ENCODE measurements at regions of chr11 and their contacts with region 1.

Region 1: DNA sequence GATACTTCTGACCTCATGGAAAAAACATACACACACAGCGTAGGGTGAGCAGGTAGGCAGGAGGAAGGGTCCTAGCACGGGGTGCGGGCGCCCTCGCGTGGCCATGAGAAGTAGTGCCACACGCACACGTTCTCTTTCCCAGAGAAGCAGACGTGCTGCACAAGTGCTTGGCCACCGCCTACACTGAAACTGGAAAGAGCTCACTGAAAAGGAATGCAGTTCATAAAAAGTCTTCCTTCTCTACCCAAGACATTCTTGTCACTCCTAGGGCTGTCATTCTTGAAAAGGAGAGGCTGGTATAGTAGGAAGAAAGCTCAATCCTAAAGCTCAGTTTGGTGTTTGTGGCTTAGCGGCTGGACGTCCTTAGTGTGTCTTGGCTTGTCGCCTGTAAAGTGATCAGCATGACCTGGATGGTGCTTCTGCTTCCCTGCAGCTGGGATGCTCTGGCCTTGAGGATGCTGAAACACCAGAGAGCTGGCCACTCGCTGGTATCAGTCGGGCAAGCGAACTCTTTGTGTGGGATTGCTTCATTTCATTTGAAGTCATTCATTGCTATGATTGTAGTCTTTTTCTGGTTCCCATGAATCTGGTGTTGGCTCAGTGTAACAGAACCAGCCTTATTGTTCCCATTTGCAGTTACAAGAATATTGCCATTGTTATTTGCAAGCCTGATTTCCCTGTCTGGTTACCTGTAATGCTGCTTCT is 303.8 kb downstream of the NTM start:
- DNase-seq: peak; percentile 74 to 88
- H3K4me3 ChIP-seq: no peak overlapping the region
- H3K4me3 Mint-ChIP-seq: no peak overlapping the region
- H3K27ac Mint-ChIP-seq: no peak overlapping the region
- H3K4me1 ChIP-seq: no peaks in the 10 kb centered on the region
- H3K4me1 Mint-ChIP-seq: no peaks in the 10 kb centered on the region
- H3K27me3 ChIP-seq: no peaks in the 10 kb centered on the region
- H3K27me3 Mint-ChIP-seq: peaks cover 18% of the 10 kb centered on the region
- CTCF ChIP-seq: peak; percentile 99 to 100

Region 2: GRCh38 chr11:131038597-131038996 is 635.6 kb before region 1 on chr11:
- CTCF ChIA-PET with region 1: no interaction called
- POLR2A ChIA-PET with region 1: no interaction called
- intact Hi-C with region 1: loop called (anchors 1 kb)
- DNase-seq: peak; percentile 45 to 59
- H3K4me3 ChIP-seq: no peak overlapping the region
- H3K4me3 Mint-ChIP-seq: no peak overlapping the region
- H3K27ac Mint-ChIP-seq: no peak overlapping the region
- H3K4me1 ChIP-seq: no peaks in the 10 kb centered on the region; the same call in 1 of the 2 replicates
- H3K4me1 Mint-ChIP-seq: no peaks in the 10 kb centered on the region
- H3K27me3 ChIP-seq: no peaks in the 10 kb centered on the region
- H3K27me3 Mint-ChIP-seq: peaks cover 10% of the 10 kb centered on the region
- CTCF ChIP-seq: peak; percentile 33 to 58

Region 3: DNA sequence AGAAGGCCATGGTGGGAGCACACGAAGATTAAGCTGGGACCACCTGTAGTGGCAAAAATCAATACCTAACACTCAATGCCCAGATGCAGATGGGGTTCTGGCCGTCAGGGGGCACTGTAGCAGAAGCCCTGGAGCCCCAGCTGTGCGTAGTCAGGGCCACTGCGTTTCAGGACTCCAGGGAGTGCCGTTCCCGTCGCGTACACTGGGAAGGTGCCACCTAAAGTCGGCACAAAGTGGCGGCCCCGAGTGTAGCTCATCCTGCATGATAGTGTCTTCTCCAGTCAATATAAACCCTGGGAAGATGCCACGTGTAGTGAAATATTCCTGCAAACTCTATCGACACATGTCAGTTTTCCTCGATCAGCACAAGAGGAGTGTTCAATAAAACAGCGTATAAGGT is 427.5 kb before region 1 on chr11:
- CTCF ChIA-PET with region 1: no interaction called
- POLR2A ChIA-PET with region 1: no interaction called
- intact Hi-C with region 1: loop called (anchors 1 kb)
- DNase-seq: peak; percentile 63 to 65
- H3K4me3 ChIP-seq: no peak overlapping the region
- H3K4me3 Mint-ChIP-seq: no peak overlapping the region
- H3K27ac Mint-ChIP-seq: no peak overlapping the region
- H3K4me1 ChIP-seq: no peaks in the 10 kb centered on the region; the same call in 1 of the 2 replicates
- H3K4me1 Mint-ChIP-seq: no peaks in the 10 kb centered on the region
- H3K27me3 ChIP-seq: 0 out of 2 replicates have a peak, but pooled peaks cover 2% of the 10 kb centered on the region
- H3K27me3 Mint-ChIP-seq: peaks cover 35% of the 10 kb centered on the region
- CTCF ChIP-seq: peak; percentile 75 to 76

Region 4: DNA sequence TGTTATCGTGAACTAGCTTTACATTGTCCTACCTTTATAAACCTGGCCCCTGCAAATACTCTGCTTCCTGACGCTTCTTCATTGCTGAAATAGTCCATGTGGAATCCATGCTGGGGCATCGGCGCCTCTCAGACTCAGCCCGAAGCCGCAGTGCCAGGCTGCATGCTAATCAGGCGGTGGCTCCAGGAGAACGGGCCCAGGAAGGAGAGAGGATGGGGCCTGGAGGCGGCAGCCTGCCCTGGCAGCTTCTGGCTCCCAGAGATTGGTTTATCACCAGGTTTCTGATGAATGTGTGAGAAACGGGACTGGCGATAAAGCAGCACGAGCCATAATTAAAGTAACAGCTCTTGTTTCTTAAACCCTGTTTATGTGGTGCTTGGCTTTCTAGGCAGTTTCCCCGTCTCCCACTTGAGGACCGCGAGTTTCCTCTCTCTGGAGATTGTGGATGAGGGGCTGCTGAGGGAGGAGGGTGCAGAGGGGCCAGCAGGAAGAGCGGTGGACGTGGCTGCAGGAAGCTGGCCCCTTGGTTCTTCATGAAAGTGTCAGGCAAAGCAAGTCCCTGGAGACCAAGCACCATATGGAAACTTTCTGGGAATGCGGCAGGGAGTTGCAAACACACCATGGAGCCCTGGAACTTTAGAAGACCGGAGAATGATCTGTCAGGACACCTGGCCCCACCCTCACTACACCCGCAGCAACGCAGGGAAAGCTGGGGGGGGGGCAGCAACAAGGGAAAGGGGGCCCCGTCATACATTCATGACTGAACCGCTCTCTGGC is 210.4 kb before region 1 on chr11:
- CTCF ChIA-PET with region 1: interaction called, 4 read pairs
- POLR2A ChIA-PET with region 1: no interaction called
- intact Hi-C with region 1: loop called (anchors 10 kb)
- DNase-seq: no peak
- H3K4me3 ChIP-seq: no peak overlapping the region
- H3K4me3 Mint-ChIP-seq: no peak overlapping the region
- H3K27ac Mint-ChIP-seq: no peak overlapping the region
- H3K4me1 ChIP-seq: no peaks in the 10 kb centered on the region
- H3K4me1 Mint-ChIP-seq: no peaks in the 10 kb centered on the region
- H3K27me3 ChIP-seq: no peaks in the 10 kb centered on the region; the same call in 1 of the 2 replicates
- H3K27me3 Mint-ChIP-seq: peaks cover 17% of the 10 kb centered on the region
- CTCF ChIP-seq: no peak

Measured in Caco-2 (cell line).